GM18951 (cell line): ENCODE measurements at regions of chrX and their contacts with region 1.

Region 1: GRCh38 chrX:23694606-23695005 is 27.3 kb downstream of the PRDX4 start:
- POLR2A ChIP-seq: no peak

Region 2: DNA sequence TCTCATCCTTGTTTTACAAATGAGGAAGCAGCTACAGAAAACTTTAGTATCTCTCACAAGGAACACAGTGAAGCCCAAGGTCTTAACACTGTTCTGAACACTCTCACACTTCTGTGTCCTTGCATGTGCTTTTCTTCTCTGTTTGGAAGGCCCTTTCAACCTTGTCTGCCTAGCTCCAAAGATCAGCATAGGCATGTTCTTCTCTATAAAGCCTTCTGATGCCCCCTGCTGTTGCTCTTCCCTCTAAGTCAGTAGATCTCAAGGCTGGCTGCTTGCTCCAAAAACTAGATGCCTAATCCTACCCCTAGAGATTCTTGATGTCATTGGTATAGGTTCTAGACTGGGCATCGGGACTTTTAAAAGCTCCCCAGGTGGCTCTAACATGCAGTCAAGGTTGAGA is 207.2 kb after region 1 on chrX:
- in situ Hi-C with region 1: loop called (anchors 5 kb)
- POLR2A ChIP-seq: no peak

Region 3: GRCh38 chrX:24054182-24055042 is 359.8 kb after region 1 on chrX and contains the start of gene EIF2S3:
- in situ Hi-C with region 1: loop called (anchors 25 kb)
- POLR2A ChIP-seq: peak; percentile 88